OCI-LY7 (cell line): ENCODE measurements at regions of chr6 and their contacts with region 1.

Region 1: DNA sequence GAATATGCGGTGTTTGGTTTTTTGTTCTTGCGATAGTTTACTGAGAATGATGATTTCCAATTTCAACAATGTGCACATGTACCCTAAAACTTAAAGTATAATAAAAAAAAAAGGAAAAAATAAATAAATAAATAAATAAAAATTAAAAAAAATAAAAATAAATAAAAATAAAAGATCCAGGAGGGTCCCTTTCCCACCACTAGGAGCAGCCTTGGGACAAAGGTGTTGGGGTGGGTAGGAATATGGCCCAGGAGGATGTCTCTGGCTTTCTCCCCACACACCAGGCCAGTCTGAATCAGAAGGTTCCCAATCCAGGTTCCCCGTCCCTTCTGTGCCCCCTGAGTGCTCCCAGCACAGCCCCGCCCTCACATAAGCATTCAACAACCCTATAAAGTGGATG is 9.5 kb downstream of the LRFN2 start:
- DNase-seq: no peak
- H3K4me3 ChIP-seq: no peak overlapping the region
- H3K27ac ChIP-seq: no peak overlapping the region
- H3K4me1 ChIP-seq: no peaks in the 10 kb centered on the region
- CTCF ChIP-seq: no peak

Region 2: DNA sequence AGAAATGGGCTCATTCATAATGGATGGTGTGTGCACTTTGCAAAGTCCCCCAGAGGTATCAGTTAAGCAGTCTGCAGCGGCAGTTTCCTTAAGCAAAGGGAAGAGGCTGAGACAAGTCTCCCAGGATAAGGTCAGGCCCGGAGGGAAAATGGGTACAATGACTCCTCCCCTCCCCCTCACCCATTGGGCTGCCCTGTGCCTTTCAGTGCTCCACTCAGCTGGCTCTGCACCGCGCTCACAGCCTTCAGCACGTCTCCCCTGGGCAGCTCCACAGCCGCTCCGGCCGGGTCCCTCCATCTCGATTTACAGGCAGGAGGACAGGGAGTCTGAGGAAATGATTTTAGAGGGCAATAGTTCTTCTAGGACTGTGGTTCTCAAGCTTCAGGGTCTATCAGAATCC is 255.3 kb before region 1 on chr6:
- CTCF ChIA-PET with region 1: no interaction called
- POLR2A ChIA-PET with region 1: interaction called, 10 read pairs
- intact Hi-C with region 1: no loop called
- DNase-seq: no peak
- H3K4me3 ChIP-seq: no peak overlapping the region
- H3K27ac ChIP-seq: no peak overlapping the region
- H3K4me1 ChIP-seq: peaks cover 15% of the 10 kb centered on the region
- CTCF ChIP-seq: no peak

Region 3: DNA sequence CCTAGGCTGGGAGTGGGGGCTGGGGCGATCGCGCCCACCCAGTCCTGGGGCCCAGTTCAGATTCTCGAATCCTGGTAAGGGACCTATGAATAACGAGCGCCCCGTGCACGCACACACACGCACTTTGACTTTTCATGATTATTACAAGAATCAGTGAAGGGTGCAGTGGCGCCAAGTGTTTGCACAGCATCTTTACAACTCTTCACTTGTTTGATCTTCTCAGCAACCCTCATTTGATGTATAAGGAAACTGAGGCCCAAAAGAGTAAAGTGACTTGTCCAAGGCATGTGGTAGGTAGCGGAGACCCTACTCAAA is 10.4 kb after region 1 on chr6:
- CTCF ChIA-PET with region 1: no interaction called
- POLR2A ChIA-PET with region 1: no interaction called
- intact Hi-C with region 1: no loop called
- DNase-seq: no peak
- H3K4me3 ChIP-seq: no peak overlapping the region
- H3K27ac ChIP-seq: no peak overlapping the region
- H3K4me1 ChIP-seq: no peaks in the 10 kb centered on the region
- CTCF ChIP-seq: no peak